Activated T-helper 1 cell treated with anti-CD3 and anti-CD28 coated beads, Interleukin-12 subunit alpha, Interleukin-12 subunit beta, Interleukin-2, Interleukin-4 antibody, amounts not matched to agents 30 ng/mL and 10 ng/mL and 1 ng/mL, durations not matched to agents 14 hours and 24 hours and 36 hours (primary cell): ENCODE measurements at regions of chr19 and their contacts with region 1.

Region 1: GRCh38 chr19:47514869-47515588 is at the start of gene NAPA:
- DNase-seq: peak; percentile 100
- H3K4me3 Mint-ChIP-seq: peak within 1 kb of the TSS; percentile 95
- H3K27ac Mint-ChIP-seq: peak within 1 kb of the TSS; percentile 92
- H3K4me1 Mint-ChIP-seq: peaks cover 63% of the 10 kb centered on the region
- H3K27me3 Mint-ChIP-seq: peaks cover 4% of the 10 kb centered on the region
- total RNA-seq, gene NAPA: 66.4 and 68.7 TPM in 2 replicates

Region 2: DNA sequence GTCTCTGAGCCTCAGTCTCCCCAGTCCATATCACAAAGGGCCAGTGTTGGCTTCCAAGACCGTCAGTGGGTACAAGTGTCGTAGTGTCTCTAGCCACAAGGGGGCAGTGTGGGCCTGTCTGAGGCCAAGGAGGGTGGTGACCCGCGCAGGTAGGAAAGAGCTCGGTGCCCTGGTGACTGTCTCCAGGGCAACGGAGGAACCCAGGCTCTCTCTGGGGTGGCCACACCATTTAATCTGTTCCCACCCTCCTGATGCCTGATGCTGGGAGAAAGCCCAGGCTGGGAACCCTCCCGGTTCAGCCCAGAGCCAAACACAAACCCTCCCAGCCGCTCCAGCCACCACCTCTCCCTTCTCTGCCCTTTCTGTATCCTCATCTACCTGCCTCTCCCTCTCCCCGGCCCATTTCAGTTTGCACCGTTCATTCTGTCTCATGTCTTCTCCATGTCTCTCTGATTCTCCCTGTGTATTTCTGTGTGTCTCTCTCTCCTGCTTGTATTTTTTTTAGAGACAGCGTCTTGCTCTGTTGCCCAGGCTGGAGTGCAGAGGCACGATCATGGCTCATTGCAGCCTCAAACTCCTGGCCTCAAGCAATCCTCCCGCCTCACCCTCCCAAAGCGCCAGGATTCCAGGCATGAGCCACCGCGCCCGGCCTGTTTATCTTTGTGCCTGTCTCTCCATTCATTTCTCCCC is 78.2 kb before region 1 on chr19:
- intact Hi-C with region 1: loop called (anchors 1 kb)
- DNase-seq: peak; percentile 74
- H3K4me3 Mint-ChIP-seq: no peak overlapping the region
- H3K27ac Mint-ChIP-seq: no peak overlapping the region
- H3K4me1 Mint-ChIP-seq: peaks cover 32% of the 10 kb centered on the region
- H3K27me3 Mint-ChIP-seq: peaks cover 12% of the 10 kb centered on the region

Region 3: DNA sequence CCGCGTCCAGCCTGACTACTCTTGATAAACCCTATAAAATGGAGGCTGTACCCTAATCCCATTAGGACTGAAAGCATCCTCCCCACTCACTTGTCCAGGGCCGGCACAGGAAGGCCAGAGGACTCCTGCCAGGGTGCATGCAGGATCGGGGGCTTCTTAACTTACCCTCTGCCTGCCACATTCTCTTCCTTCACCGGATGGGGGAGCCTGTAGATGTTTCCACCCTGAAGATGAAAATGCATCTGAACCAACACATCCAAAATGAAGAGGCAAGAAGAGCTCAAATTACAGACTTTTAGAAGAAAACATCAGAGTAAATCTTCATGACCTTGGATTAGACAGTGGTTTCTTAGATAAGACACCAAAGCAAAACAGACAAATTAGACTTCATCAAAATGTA is 25.7 kb after region 1 on chr19:
- intact Hi-C with region 1: loop called (anchors 1 kb)
- DNase-seq: no peak
- H3K4me3 Mint-ChIP-seq: no peak overlapping the region
- H3K27ac Mint-ChIP-seq: peak overlapping the region; percentile 72
- H3K4me1 Mint-ChIP-seq: peaks cover 13% of the 10 kb centered on the region
- H3K27me3 Mint-ChIP-seq: peaks cover 5% of the 10 kb centered on the region

Region 4: GRCh38 chr19:47608074-47608918 is 93.3 kb after region 1 on chr19:
- intact Hi-C with region 1: loop called (anchors 1 kb)
- DNase-seq: peak; percentile 97
- H3K4me3 Mint-ChIP-seq: peak overlapping the region; percentile 87
- H3K27ac Mint-ChIP-seq: peak overlapping the region; percentile 62
- H3K4me1 Mint-ChIP-seq: peaks cover 23% of the 10 kb centered on the region
- H3K27me3 Mint-ChIP-seq: no peaks in the 10 kb centered on the region